ENCODE measurements at regions of chr13 and their contacts with region 1.

Region 1: GRCh38 chr13:94549232-94550061 is 46.5 kb downstream of the TGDS start:
- DNase-seq: peak; percentile 83 to 99 (median 92)
- ATAC-seq: peak; percentile 91
- H3K4me3 Mint-ChIP-seq: peak overlapping the region; percentile 89 to 99 (median 94)
- H3K27ac Mint-ChIP-seq: peak overlapping the region; percentile 95 to 100 (median 98)
- H3K4me1 Mint-ChIP-seq: peaks cover 14 to 33% (median 25%) of the 10 kb centered on the region in 4 donors
- H3K27me3 Mint-ChIP-seq: peaks cover 0 to 5% (median 0%) of the 10 kb centered on the region in 5 donors

Region 2: DNA sequence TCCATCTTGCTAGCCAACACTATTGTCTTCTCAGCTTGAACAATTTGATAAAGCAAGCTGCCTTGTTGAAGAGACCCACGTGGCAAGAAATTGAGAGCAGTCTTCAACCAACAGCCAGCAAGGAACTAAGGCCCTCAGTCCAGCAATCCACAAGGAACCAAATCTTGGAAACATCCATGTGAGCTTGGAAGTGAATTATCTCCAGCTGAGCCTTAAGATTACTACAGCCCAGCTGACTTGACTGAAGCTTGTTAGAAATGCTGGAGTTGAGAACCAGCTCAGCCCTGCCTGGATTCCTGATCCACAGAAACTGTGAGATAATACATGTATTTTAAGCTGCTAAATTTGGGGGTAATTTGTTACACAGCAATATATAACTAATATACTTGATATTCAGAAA is 43.7 kb before region 1 on chr13:
- POLR2A ChIA-PET with region 1: interaction called, 11 read pairs
- DNase-seq: no peak
- ATAC-seq: no peak
- H3K4me3 Mint-ChIP-seq: no peak overlapping the region
- H3K27ac Mint-ChIP-seq: no peak overlapping the region
- H3K4me1 Mint-ChIP-seq: peaks cover 9 to 16% (median 14%) of the 10 kb centered on the region in 4 donors
- H3K27me3 Mint-ChIP-seq: peaks cover 4 to 21% (median 8%) of the 10 kb centered on the region in 5 donors

Region 3: GRCh38 chr13:94560116-94560515 is 10.7 kb after region 1 on chr13:
- POLR2A ChIA-PET with region 1: interaction called, 17 read pairs
- DNase-seq: no peak
- ATAC-seq: no peak
- H3K4me3 Mint-ChIP-seq: no peak overlapping the region
- H3K27ac Mint-ChIP-seq: peak overlapping the region in 4 of 10 donors; percentile 29 to 89 (median 50)
- H3K4me1 Mint-ChIP-seq: peaks cover 7 to 30% (median 18%) of the 10 kb centered on the region in 4 donors
- H3K27me3 Mint-ChIP-seq: no peaks in the 10 kb centered on the region

Region 4: DNA sequence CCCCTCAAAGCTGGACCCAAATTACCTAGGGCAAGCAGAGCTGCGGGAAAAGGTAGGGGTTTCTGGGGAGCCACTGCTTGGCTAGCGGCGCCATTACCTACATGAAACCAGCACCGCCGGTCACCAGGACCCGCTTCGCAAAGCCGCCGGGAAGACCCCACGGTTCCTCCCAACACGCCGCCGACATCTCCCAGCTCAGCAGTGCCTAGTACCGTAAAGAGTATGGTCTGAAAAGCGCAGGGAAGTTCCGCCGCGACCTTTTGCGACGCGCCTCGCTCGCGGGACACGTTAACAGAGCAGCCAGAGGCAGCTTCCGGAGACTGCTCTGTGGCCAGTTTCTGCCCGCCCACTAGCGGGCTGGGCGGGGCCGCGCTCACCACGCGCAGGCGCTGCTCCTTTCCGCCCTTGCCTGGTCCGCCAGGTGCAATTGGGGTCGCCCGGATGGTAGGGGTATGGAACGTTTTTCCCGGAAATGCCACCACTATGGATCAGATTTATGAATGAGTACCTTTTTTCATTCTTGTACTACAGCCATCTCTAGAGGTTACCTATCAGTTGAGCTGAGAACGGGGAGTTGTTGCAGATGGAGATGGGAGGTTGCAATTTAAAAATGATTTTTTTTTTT is 46.6 kb after region 1 on chr13 and contains the start of gene TGDS:
- POLR2A ChIA-PET with region 1: interaction called, 62 read pairs
- DNase-seq: peak; percentile 72 to 92 (median 84)
- ATAC-seq: peak; percentile 95 to 99
- H3K4me3 Mint-ChIP-seq: peak within 1 kb of the TSS; percentile 89 to 98 (median 94)
- H3K27ac Mint-ChIP-seq: peak within 1 kb of the TSS; percentile 91 to 96 (median 94)
- H3K4me1 Mint-ChIP-seq: peaks cover 19 to 47% (median 37%) of the 10 kb centered on the region in 4 donors
- H3K27me3 Mint-ChIP-seq: no peaks in the 10 kb centered on the region
- polyA plus RNA-seq, gene TGDS: 8.5 to 14.4 (median 13.2) TPM

Region 5: DNA sequence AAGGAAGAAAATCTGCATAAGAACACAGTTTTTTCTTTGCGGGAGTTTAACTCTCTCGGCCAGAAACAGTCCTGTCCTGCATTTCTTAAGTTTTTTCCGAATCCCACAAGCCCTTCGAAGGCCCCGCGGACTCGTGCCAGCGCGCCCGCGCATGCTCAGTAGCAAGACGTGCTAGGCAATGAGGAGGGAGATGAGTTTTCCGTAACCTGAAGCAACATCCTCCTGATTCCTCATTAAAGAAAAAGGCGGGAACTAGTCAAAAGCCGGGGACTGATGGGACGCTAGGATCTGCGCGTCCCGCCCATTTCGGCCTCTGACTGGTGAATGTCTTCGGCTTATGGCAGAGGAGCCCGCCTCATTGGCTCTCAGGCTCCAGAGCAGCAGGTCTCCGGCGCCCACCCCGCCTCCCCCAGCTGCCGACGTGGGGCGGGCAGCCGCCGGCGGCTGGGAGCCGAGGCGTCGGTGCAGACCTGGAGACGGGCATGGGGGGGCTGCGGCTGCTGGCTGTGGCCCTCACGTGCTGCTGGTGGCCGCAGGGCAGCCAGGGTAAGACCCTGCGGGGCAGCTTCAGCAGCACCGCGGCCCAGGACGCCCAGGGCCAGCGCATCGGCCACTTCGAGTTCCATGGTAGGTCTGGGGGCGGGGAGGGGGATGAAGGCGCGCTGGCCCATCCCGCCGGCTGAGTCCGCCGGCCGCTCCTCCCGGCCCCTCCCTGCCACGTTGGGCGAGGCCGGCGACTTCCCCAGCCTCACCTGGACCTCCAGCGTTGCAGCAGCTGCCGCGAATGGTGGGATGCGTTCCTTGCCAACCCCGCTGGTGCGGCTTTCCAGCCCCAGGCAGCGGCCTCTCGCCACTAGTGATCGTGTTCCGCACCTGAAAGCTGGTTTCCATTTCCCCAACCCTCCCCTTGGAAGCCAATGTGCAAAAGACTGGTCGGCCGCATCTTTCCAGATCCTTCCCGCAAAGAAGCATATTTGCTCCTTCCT is 52.3 kb after region 1 on chr13 and contains the start of gene GPR180:
- POLR2A ChIA-PET with region 1: interaction called, 62 read pairs
- DNase-seq: peak; percentile 72 to 89 (median 85)
- ATAC-seq: peak; percentile 97
- H3K4me3 Mint-ChIP-seq: peak within 1 kb of the TSS; percentile 77 to 91 (median 86)
- H3K27ac Mint-ChIP-seq: peak within 1 kb of the TSS; percentile 68 to 96 (median 90)
- H3K4me1 Mint-ChIP-seq: peaks cover 6 to 36% (median 28%) of the 10 kb centered on the region in 4 donors
- H3K27me3 Mint-ChIP-seq: no peaks in the 10 kb centered on the region
- polyA plus RNA-seq, gene GPR180: 0.96 to 1.8 (median 1.1) TPM

Measured in naive thymus-derived CD8-positive, alpha-beta T cell (primary cell).